ENCODE measurements at regions of chr2 and their contacts with region 1.

Region 1: GRCh38 chr2:216034065-216034464 is 20.7 kb upstream of the MREG start:
- DNase-seq: peak; percentile 65 to 86 (median 76)
- ATAC-seq: peak; percentile 95
- H3K4me3 ChIP-seq: no peak overlapping the region
- H3K4me3 Mint-ChIP-seq: no peak overlapping the region
- H3K27ac ChIP-seq: no peak overlapping the region
- H3K27ac Mint-ChIP-seq: no peak overlapping the region
- H3K4me1 ChIP-seq: peaks cover 7% of the 10 kb centered on the region
- H3K4me1 Mint-ChIP-seq: peaks cover 19% of the 10 kb centered on the region
- H3K27me3 ChIP-seq: no peaks in the 10 kb centered on the region
- H3K27me3 Mint-ChIP-seq: no peaks in the 10 kb centered on the region
- CTCF ChIP-seq: peak; percentile 75

Region 2: GRCh38 chr2:215764441-215765048 is 269.5 kb before region 1 on chr2:
- CTCF ChIA-PET with region 1: no interaction called
- POLR2A ChIA-PET with region 1: no interaction called
- intact Hi-C with region 1: no loop called
- DNase-seq: no peak
- ATAC-seq: no peak
- H3K4me3 ChIP-seq: no peak overlapping the region
- H3K4me3 Mint-ChIP-seq: no peak overlapping the region
- H3K27ac ChIP-seq: no peak overlapping the region
- H3K27ac Mint-ChIP-seq: no peak overlapping the region
- H3K4me1 ChIP-seq: no peaks in the 10 kb centered on the region
- H3K4me1 Mint-ChIP-seq: no peaks in the 10 kb centered on the region
- H3K27me3 ChIP-seq: no peaks in the 10 kb centered on the region
- H3K27me3 Mint-ChIP-seq: peaks cover 19% of the 10 kb centered on the region
- CTCF ChIP-seq: no peak

Region 3: DNA sequence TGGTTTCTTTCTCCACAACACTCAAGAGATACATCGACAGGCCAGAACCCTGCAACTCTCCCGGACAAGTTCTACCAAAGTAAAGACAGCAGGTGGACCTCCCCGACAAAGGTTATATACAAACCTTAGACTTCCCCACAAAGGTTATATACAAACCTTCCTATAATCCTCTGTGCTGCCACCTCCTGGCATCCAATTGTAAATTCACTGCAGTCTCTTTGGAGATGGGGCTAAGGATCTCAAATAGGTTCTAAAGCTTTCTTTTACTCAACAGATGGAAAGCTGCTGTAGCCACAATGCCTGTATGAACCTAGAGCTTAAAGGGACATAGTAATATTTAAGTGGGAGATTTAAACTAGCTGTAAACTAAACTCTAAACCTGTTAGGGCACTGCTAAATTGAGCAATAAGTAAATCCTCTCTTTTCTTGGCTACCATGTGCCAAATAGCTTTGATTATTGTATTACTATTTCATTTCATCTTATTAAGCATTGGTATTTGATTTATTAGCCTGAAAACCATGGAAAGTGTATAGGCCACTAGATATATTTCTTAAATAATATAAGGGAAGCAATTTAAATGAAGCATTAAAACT is 10.9 kb before region 1 on chr2:
- CTCF ChIA-PET with region 1: interaction called, 77 read pairs
- POLR2A ChIA-PET with region 1: interaction called, 3 read pairs
- intact Hi-C with region 1: no loop called
- DNase-seq: peak in 7 of 9 experiments; percentile 18 to 69 (median 46)
- ATAC-seq: peak; percentile 83
- H3K4me3 ChIP-seq: no peak overlapping the region
- H3K4me3 Mint-ChIP-seq: no peak overlapping the region
- H3K27ac ChIP-seq: no peak overlapping the region
- H3K27ac Mint-ChIP-seq: no peak overlapping the region
- H3K4me1 ChIP-seq: no peaks in the 10 kb centered on the region
- H3K4me1 Mint-ChIP-seq: peaks cover 11% of the 10 kb centered on the region
- H3K27me3 ChIP-seq: no peaks in the 10 kb centered on the region
- H3K27me3 Mint-ChIP-seq: no peaks in the 10 kb centered on the region
- CTCF ChIP-seq: peak; percentile 65

Region 4: DNA sequence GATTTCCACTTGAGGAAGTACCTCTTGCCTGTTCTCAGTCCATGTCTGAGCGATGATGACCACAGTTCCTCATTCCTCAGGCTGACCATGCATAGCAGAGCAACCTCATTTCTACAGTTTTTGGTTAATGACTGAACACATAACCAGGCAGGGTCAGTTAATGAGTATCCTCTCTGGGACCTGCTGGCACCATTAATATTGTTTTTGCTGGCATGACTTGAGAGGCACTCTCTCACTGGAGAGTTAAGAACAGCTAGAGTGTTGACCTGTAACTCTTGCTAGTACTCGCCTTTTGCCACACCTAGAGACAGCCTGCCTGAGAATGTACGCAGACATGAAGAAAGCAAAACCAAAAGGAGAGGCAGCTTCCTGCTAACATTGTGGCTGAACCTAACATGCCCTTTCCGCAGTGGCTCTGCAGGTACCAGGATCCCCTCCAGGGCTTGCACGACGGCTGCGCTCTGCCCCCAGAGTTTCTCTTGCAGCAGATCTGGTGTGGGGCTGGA is 23.7 kb after region 1 on chr2:
- CTCF ChIA-PET with region 1: interaction called, 12 read pairs
- POLR2A ChIA-PET with region 1: interaction called, 3 read pairs
- intact Hi-C with region 1: loop called in 1 of 2 experiments (anchors 1 kb)
- DNase-seq: peak; percentile 22 to 87 (median 67)
- ATAC-seq: peak; percentile 99
- H3K4me3 ChIP-seq: peak overlapping the region; percentile 36 to 46
- H3K4me3 Mint-ChIP-seq: peak overlapping the region; percentile 81
- H3K27ac ChIP-seq: peak overlapping the region; percentile 80 to 91
- H3K27ac Mint-ChIP-seq: peak overlapping the region; percentile 99
- H3K4me1 ChIP-seq: peaks cover 20% of the 10 kb centered on the region
- H3K4me1 Mint-ChIP-seq: peaks cover 32% of the 10 kb centered on the region
- H3K27me3 ChIP-seq: no peaks in the 10 kb centered on the region
- H3K27me3 Mint-ChIP-seq: no peaks in the 10 kb centered on the region
- CTCF ChIP-seq: no peak

Region 5: DNA sequence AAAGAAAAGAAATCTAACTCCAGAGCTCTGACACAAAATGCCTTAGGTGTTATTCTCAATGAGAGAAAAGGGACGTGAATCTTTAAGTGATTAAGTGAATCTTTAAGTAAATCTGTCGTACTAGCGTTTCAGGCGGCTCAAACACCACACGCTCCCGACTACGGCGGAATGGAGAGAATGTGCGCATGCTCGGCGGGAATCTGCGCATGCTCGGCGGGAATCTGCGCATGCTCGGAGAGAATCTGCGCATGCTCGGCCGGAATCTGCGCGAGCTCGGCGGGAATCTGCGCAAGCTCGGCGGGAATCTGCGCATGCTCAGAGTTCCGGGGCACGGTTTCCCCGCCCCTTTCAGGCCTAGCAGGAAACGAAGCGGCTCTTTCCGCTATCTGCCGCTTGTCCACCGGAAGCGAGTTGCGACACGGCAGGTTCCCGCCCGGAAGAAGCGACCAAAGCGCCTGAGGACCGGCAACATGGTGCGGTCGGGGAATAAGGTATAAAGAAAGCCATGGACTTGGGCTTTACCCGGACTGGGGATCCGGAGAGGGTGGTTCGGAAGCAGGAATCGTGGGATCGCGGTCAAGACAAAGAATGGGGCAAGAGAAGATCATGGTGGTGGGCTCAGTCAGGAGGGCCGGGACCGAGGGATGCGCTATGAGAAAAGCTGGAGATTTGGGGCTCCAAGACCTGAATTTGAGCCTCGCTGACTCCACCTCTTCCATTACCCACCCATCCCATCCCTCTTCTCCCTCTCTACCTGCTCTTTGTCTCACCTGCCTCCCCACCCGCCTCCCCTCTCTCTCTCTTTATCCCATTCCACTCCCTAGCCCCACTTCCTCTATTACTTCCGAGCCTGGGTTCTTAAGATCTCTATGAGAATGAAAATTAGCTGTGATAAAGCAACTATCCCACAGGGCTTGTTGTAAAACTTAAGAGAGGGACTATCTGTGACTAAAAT is 75.2 kb after region 1 on chr2 and contains the start of gene XRCC5:
- CTCF ChIA-PET with region 1: interaction called, 24 read pairs
- POLR2A ChIA-PET with region 1: no interaction called
- intact Hi-C with region 1: loop called (anchors 1 to 10 kb)
- DNase-seq: peak; percentile 93 to 99 (median 99)
- ATAC-seq: peak; percentile 84
- H3K4me3 ChIP-seq: peak within 1 kb of the TSS; percentile 96
- H3K4me3 Mint-ChIP-seq: peak within 1 kb of the TSS; percentile 100
- H3K27ac ChIP-seq: peak within 1 kb of the TSS; percentile 92 to 96
- H3K27ac Mint-ChIP-seq: peak within 1 kb of the TSS; percentile 100
- H3K4me1 ChIP-seq: peaks cover 46% of the 10 kb centered on the region
- H3K4me1 Mint-ChIP-seq: peaks cover 51% of the 10 kb centered on the region
- H3K27me3 ChIP-seq: no peaks in the 10 kb centered on the region
- H3K27me3 Mint-ChIP-seq: no peaks in the 10 kb centered on the region
- CTCF ChIP-seq: no peak
- total RNA-seq, gene XRCC5: 120 to 125 TPM

Region 6: DNA sequence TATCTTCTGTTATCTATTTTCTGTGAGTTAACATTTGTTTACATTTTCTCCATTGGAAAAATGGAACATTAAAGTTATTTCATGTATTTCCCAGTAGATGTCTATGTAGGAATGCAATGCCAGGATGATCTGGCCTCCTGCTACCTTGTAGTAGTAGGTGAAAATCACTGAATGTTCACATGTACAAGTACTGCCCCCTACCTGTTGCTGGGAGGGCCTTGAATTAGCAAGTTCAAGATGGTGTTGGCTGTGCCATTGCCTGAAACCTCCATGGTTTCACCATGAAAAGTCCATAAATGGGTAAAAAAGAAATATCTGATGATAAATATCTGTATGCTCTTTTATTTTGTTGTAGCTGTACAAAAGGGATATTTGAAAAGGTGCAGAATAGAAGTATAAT is 105.8 kb after region 1 on chr2:
- CTCF ChIA-PET with region 1: interaction called, 41 read pairs
- POLR2A ChIA-PET with region 1: interaction called, 3 read pairs
- intact Hi-C with region 1: loop called (anchors 1 kb)
- DNase-seq: peak in 6 of 9 experiments; percentile 3 to 68 (median 42)
- ATAC-seq: peak; percentile 56
- H3K4me3 ChIP-seq: no peak overlapping the region
- H3K4me3 Mint-ChIP-seq: no peak overlapping the region
- H3K27ac ChIP-seq: no peak overlapping the region
- H3K27ac Mint-ChIP-seq: peak overlapping the region; percentile 23
- H3K4me1 ChIP-seq: no peaks in the 10 kb centered on the region
- H3K4me1 Mint-ChIP-seq: peaks cover 23% of the 10 kb centered on the region
- H3K27me3 ChIP-seq: no peaks in the 10 kb centered on the region
- H3K27me3 Mint-ChIP-seq: no peaks in the 10 kb centered on the region
- CTCF ChIP-seq: peak; percentile 59